Caco-2 (cell line): ENCODE measurements at regions of chrX and their contacts with region 1.

Region 1: GRCh38 chrX:124211312-124211942 is 121.0 kb upstream of the TEX13D start:
- DNase-seq: peak in 1 of 2 experiments; percentile 32
- H3K4me3 ChIP-seq: no peak overlapping the region
- H3K4me3 Mint-ChIP-seq: no peak overlapping the region
- H3K27ac Mint-ChIP-seq: no peak overlapping the region
- H3K4me1 ChIP-seq: no peaks in the 10 kb centered on the region
- H3K4me1 Mint-ChIP-seq: no peaks in the 10 kb centered on the region
- H3K27me3 ChIP-seq: no peaks in the 10 kb centered on the region
- H3K27me3 Mint-ChIP-seq: no peaks in the 10 kb centered on the region
- CTCF ChIP-seq: peak; percentile 39 to 59

Region 2: GRCh38 chrX:124098089-124098488 is 113.3 kb before region 1 on chrX:
- CTCF ChIA-PET with region 1: no interaction called
- POLR2A ChIA-PET with region 1: no interaction called
- intact Hi-C with region 1: loop called (anchors 5 kb)
- DNase-seq: peak in 1 of 2 experiments; percentile 7
- H3K4me3 ChIP-seq: no peak overlapping the region
- H3K4me3 Mint-ChIP-seq: no peak overlapping the region
- H3K27ac Mint-ChIP-seq: no peak overlapping the region
- H3K4me1 ChIP-seq: no peaks in the 10 kb centered on the region
- H3K4me1 Mint-ChIP-seq: no peaks in the 10 kb centered on the region
- H3K27me3 ChIP-seq: no peaks in the 10 kb centered on the region
- H3K27me3 Mint-ChIP-seq: no peaks in the 10 kb centered on the region
- CTCF ChIP-seq: peak; percentile 15 to 42

Region 3: GRCh38 chrX:124194199-124194598 is 17.2 kb before region 1 on chrX:
- CTCF ChIA-PET with region 1: no interaction called
- POLR2A ChIA-PET with region 1: no interaction called
- intact Hi-C with region 1: no loop called
- DNase-seq: no peak
- H3K4me3 ChIP-seq: no peak overlapping the region
- H3K4me3 Mint-ChIP-seq: no peak overlapping the region
- H3K27ac Mint-ChIP-seq: no peak overlapping the region
- H3K4me1 ChIP-seq: peaks cover 19% of the 10 kb centered on the region
- H3K4me1 Mint-ChIP-seq: peaks cover 14% of the 10 kb centered on the region
- H3K27me3 ChIP-seq: no peaks in the 10 kb centered on the region
- H3K27me3 Mint-ChIP-seq: no peaks in the 10 kb centered on the region
- CTCF ChIP-seq: no peak

Region 4: DNA sequence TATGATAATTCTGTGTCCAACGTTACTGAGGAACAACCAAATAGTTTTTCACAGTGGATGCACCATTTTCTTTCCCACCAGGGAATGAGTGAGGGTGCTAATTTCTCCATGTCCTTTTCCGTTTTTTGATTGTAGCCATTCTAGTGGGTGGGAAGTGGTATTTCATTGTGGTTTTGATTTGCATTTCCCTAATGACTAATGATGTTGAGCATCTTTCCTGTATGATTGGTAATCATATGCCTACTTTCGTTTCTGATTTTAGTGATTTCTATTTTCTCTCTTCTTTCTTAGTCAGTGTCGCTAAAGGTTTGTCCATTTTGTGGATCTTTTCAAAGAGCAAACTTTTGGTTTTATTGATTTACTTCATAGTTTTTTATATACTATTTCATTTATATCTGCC is 89.0 kb after region 1 on chrX:
- CTCF ChIA-PET with region 1: no interaction called
- POLR2A ChIA-PET with region 1: no interaction called
- intact Hi-C with region 1: no loop called
- DNase-seq: no peak
- H3K4me3 ChIP-seq: no peak overlapping the region
- H3K4me3 Mint-ChIP-seq: no peak overlapping the region
- H3K27ac Mint-ChIP-seq: no peak overlapping the region
- H3K4me1 ChIP-seq: no peaks in the 10 kb centered on the region
- H3K4me1 Mint-ChIP-seq: no peaks in the 10 kb centered on the region
- H3K27me3 ChIP-seq: no peaks in the 10 kb centered on the region
- H3K27me3 Mint-ChIP-seq: peaks cover 5% of the 10 kb centered on the region
- CTCF ChIP-seq: no peak

Region 5: GRCh38 chrX:124346117-124346876 is 134.9 kb after region 1 on chrX and contains the start of gene SH2D1A:
- CTCF ChIA-PET with region 1: no interaction called
- POLR2A ChIA-PET with region 1: no interaction called
- intact Hi-C with region 1: loop called (anchors 10 kb)
- DNase-seq: no peak
- H3K4me3 ChIP-seq: no peak within 1 kb of the TSS
- H3K4me3 Mint-ChIP-seq: no peak within 1 kb of the TSS
- H3K27ac Mint-ChIP-seq: no peak within 1 kb of the TSS
- H3K4me1 ChIP-seq: no peaks in the 10 kb centered on the region
- H3K4me1 Mint-ChIP-seq: no peaks in the 10 kb centered on the region
- H3K27me3 ChIP-seq: no peaks in the 10 kb centered on the region
- H3K27me3 Mint-ChIP-seq: no peaks in the 10 kb centered on the region
- CTCF ChIP-seq: no peak
- total RNA-seq, gene SH2D1A: not detected in 2 replicates

Region 6: DNA sequence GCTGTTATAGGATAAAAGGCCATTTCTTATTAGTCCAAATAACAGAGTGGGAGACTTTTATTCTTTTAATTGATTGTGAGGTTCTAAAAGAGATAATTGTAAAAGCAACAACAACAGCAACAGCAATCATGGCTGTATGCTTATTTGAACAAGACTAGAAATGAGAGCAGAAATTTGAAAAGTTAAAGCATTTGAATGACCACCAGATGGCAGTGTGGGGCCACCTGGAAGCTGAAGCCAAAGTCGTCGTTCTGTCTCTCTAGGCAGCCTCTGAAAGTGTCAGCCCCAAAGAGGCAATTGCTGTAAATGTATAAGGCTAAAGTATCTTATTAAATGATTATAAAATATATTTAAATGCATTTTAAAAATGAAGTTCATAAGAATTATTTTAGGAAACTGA is 177.1 kb after region 1 on chrX:
- CTCF ChIA-PET with region 1: no interaction called
- POLR2A ChIA-PET with region 1: no interaction called
- intact Hi-C with region 1: loop called (anchors 2 kb)
- DNase-seq: peak; percentile 33 to 48
- H3K4me3 ChIP-seq: no peak overlapping the region
- H3K4me3 Mint-ChIP-seq: no peak overlapping the region
- H3K27ac Mint-ChIP-seq: no peak overlapping the region
- H3K4me1 ChIP-seq: no peaks in the 10 kb centered on the region
- H3K4me1 Mint-ChIP-seq: no peaks in the 10 kb centered on the region
- H3K27me3 ChIP-seq: no peaks in the 10 kb centered on the region
- H3K27me3 Mint-ChIP-seq: no peaks in the 10 kb centered on the region
- CTCF ChIP-seq: peak; percentile 47 to 57